ENCODE measurements at regions of chr4 and their contacts with region 1.

Region 1: DNA sequence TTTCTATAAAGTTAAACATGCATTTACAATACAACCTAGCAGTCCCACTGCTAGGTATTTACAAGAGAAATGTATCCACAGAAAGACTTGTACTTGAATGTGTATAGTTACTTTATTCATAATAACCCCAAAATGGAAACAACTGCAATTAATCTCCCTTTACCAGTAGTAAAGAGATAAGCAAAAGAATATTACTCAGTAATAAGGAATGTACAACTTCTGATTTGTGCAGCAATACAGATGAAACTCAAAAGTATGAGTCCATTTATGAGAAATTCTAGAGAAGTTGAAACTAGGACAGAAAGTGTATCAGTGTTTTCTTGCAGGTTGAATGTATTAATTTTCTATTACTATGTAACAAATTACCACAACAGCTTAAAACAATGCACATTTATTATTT is 15.2 kb downstream of the USP53 start:
- DNase-seq: peak; percentile 79
- ATAC-seq: peak; percentile 78
- H3K4me3 ChIP-seq: no peak overlapping the region
- H3K27ac ChIP-seq: no peak overlapping the region; the same call in 1 of the 2 replicates
- H3K4me1 ChIP-seq: peaks cover 10% of the 10 kb centered on the region
- H3K27me3 ChIP-seq: no peaks in the 10 kb centered on the region
- CTCF ChIP-seq: no peak
- POLR2A ChIP-seq: no peak
- RAD21 ChIP-seq: no peak

Region 2: DNA sequence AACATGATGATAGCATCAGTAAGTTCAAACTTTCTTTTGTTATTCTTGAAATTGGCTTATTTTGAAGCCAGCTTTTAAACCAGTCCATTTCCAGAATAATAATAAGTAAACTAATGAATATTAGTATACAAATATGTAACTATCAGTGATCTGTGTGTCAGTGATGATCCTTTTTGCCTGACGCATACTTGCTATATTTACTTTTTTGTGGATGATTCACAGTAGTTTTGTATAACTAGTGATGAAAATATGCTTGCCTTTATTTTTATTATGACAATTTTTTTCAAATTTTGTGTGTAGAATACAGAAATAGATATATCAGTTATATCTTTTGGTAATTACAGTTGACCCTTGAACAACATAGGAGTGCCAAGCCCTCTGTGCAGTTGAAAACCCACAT is 34.3 kb after region 1 on chr4:
- CTCF ChIA-PET with region 1: no interaction called
- POLR2A ChIA-PET with region 1: no interaction called
- dilution Hi-C with region 1: no loop called
- in situ Hi-C with region 1: no loop called
- intact Hi-C with region 1: loop called (anchors 5 kb)
- DNase-seq: peak; percentile 33
- ATAC-seq: peak; percentile 51
- H3K4me3 ChIP-seq: no peak overlapping the region
- H3K27ac ChIP-seq: no peak overlapping the region
- H3K4me1 ChIP-seq: no peaks in the 10 kb centered on the region
- H3K27me3 ChIP-seq: no peaks in the 10 kb centered on the region
- CTCF ChIP-seq: no peak
- POLR2A ChIP-seq: no peak
- RAD21 ChIP-seq: no peak